ENCODE measurements at regions of chr17 and their contacts with region 1.

Region 1: DNA sequence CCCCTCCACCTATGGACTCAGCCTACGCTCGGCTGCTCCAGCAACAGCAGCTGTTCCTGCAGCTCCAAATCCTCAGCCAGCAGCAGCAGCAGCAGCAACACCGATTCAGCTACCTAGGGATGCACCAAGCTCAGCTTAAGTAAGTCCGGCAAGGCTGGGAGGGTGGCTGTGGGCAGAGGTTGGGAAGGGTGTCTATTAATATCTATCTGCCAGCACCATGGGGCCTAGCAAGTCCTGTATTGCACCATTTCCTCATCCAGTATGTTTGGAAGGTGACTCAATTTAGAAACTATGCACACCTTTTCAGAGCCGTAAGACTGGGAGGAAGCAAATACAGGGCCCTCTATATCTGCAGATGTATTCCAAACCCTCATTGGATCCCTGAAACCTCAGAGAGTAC is 45.0 kb upstream of the ARHGAP44 start:
- DNase-seq: no peak
- H3K4me3 ChIP-seq: no peak overlapping the region
- H3K27ac ChIP-seq: peak overlapping the region; percentile 13
- H3K27me3 ChIP-seq: no peaks in the 10 kb centered on the region
- CTCF ChIP-seq: no peak

Region 2: GRCh38 chr17:12256380-12256995 is 487.8 kb before region 1 on chr17:
- CTCF ChIA-PET with region 1: interaction called, 19 read pairs
- POLR2A ChIA-PET with region 1: no interaction called
- DNase-seq: peak; percentile 56
- H3K4me3 ChIP-seq: no peak overlapping the region
- H3K27ac ChIP-seq: no peak overlapping the region
- H3K27me3 ChIP-seq: no peaks in the 10 kb centered on the region
- CTCF ChIP-seq: peak; percentile 79

Region 3: GRCh38 chr17:12580640-12581039 is 163.7 kb before region 1 on chr17:
- CTCF ChIA-PET with region 1: no interaction called
- POLR2A ChIA-PET with region 1: no interaction called
- DNase-seq: no peak
- H3K4me3 ChIP-seq: no peak overlapping the region
- H3K27ac ChIP-seq: no peak overlapping the region
- H3K27me3 ChIP-seq: no peaks in the 10 kb centered on the region
- CTCF ChIP-seq: no peak

Region 4: DNA sequence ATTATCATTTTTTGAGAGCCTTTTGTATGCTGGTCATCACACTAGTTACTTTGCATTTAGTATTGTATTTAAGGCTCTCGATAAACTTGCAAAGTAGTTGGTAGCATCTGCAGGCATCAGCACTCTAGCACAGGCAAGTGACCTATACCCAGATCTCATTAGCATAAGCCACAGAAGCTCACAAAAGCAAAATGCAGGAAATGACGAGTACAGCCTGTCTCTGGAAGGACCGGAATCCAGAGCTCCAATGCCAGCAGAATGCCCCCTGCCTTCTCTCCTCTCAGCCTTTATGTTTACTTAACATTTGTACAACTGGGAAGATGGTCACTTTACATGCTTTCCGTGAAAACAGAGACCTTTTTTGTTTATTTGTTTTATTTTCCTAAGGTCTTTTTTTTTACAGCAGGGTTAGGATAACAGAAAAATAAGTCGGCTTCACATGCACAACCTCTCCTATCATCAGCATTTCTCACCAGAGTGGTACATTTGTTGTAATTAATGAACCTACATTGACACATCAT is 124.0 kb before region 1 on chr17:
- CTCF ChIA-PET with region 1: no interaction called
- POLR2A ChIA-PET with region 1: no interaction called
- DNase-seq: no peak
- H3K4me3 ChIP-seq: no peak overlapping the region
- H3K27ac ChIP-seq: peak overlapping the region; percentile 78
- H3K27me3 ChIP-seq: no peaks in the 10 kb centered on the region
- CTCF ChIP-seq: no peak

Region 5: DNA sequence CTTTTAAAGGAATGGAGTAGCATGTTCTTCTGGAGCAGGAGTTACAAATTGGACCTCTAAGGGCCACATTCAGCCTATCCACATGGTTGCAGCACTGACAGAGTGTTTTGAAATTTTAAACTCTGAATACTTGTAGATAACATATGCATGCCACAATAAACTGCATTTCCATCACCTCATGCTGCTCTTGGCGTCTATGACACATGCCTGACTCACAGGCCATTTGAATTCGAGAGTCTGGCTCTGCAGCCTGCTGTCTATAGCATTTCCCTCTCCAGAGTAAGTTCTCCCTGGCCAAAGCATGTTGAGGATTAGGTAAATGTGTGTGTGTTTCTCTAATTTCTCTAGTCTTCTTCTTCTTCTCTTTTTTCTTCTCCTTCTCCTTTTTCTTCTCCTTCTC is 107.3 kb before region 1 on chr17:
- CTCF ChIA-PET with region 1: no interaction called
- POLR2A ChIA-PET with region 1: no interaction called
- DNase-seq: peak; percentile 92
- H3K4me3 ChIP-seq: no peak overlapping the region
- H3K27ac ChIP-seq: no peak overlapping the region
- H3K27me3 ChIP-seq: no peaks in the 10 kb centered on the region
- CTCF ChIP-seq: no peak

Region 6: DNA sequence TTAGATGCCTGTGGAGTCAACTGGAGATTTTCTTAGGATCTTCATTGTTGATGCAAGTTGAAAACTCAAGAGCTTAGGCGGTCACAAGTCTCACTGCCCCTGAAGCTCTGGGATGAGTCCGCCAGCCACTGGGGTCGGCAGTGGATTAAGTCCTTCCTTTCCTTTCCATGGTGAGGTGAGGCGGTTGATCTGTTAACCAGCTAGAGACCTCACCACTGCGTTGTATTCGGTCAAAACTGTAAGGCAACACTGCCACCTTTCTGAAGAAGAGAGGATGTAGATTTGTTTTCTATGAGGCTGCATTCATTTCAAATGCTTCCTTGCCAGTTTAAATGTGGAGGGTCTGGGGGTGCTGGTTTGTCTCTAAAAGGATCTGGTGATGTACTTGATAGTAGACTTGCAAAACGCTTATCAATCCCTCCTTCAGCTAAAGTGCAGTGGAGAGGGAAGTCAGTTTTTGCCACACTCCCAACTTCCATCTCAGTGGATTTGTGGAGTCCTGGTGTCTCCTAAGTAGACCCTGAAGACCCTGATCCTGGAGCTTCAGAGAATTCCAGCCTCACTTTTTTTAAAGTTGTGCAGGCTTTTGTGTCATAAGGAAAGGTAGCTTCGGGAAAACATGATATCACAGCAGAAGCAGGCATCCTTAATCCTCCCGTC is 76.9 kb before region 1 on chr17:
- CTCF ChIA-PET with region 1: interaction called, 40 read pairs
- POLR2A ChIA-PET with region 1: interaction called, 4 read pairs
- DNase-seq: peak; percentile 70
- H3K4me3 ChIP-seq: peak overlapping the region; percentile 77
- H3K27ac ChIP-seq: peak overlapping the region; percentile 25
- H3K27me3 ChIP-seq: no peaks in the 10 kb centered on the region
- CTCF ChIP-seq: peak; percentile 75

Region 7: GRCh38 chr17:12680407-12680897 is 63.8 kb before region 1 on chr17:
- CTCF ChIA-PET with region 1: interaction called, 12 read pairs
- POLR2A ChIA-PET with region 1: no interaction called
- DNase-seq: no peak
- H3K4me3 ChIP-seq: peak overlapping the region; percentile 36
- H3K27ac ChIP-seq: no peak overlapping the region
- H3K27me3 ChIP-seq: no peaks in the 10 kb centered on the region
- CTCF ChIP-seq: no peak

Region 8: DNA sequence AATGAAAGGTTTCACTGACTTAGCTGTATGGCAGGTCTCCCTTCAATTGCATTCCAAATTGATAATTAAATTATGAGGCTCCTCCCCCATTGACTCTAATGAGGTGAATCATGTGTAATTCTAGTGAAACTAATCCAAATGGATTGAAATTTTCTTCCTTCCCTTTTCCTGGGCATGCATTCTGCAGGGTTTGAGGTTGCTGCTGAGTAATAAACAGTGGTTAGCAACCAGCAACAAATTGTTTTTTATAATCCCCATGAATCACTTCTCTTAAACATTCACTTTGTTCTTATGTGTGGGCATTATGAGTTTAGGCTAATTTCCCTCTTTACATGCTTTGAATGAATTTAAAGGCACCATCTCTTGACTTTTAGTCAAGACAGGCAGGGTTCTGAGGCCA is 35.2 kb before region 1 on chr17:
- CTCF ChIA-PET with region 1: interaction called, 10 read pairs
- POLR2A ChIA-PET with region 1: no interaction called
- DNase-seq: no peak
- H3K4me3 ChIP-seq: no peak overlapping the region
- H3K27ac ChIP-seq: no peak overlapping the region
- H3K27me3 ChIP-seq: no peaks in the 10 kb centered on the region
- CTCF ChIP-seq: no peak

Region 9: DNA sequence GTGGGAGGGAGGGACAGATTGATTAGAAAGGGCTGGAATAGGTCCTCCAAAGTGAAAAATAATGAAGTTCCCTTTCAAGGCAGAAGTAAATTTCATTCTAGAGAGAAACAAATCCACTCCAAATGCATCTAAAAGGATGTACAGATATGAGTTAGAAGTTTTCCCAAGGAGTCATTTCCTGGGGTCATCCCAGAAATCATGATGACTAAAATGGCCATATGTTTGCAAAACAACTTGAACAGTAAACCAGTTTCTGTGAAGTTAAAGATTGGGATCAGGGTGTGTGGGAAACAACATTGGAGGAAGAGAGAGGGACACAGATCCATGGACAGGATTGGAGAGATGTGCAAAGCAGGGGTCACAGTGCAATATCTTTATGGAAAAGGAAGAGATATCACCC is 12.5 kb after region 1 on chr17:
- CTCF ChIA-PET with region 1: interaction called, 25 read pairs
- POLR2A ChIA-PET with region 1: interaction called, 5 read pairs
- DNase-seq: no peak
- H3K4me3 ChIP-seq: no peak overlapping the region
- H3K27ac ChIP-seq: no peak overlapping the region
- H3K27me3 ChIP-seq: no peaks in the 10 kb centered on the region
- CTCF ChIP-seq: no peak

Region 10: DNA sequence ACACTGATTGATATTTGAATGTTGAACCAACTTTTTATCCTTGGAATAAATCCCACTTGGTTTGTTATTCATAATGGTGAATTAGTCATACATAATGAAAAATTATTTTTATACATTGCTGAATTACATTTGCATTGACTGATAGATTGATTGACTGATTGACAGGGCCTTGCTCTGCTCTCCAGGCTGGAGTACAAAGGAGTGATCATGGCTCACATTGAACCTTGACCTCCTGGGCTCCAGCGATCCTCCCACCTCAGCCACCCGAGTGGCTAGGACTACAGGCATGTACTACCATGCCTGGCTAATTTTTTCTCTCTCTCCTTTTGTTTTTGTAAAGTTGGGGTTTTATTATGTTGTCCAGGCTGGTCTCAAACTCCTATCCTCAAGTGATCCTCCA is 142.8 kb after region 1 on chr17:
- CTCF ChIA-PET with region 1: no interaction called
- POLR2A ChIA-PET with region 1: no interaction called
- DNase-seq: no peak
- H3K4me3 ChIP-seq: no peak overlapping the region
- H3K27ac ChIP-seq: no peak overlapping the region
- H3K27me3 ChIP-seq: no peaks in the 10 kb centered on the region
- CTCF ChIP-seq: no peak

Region 11: DNA sequence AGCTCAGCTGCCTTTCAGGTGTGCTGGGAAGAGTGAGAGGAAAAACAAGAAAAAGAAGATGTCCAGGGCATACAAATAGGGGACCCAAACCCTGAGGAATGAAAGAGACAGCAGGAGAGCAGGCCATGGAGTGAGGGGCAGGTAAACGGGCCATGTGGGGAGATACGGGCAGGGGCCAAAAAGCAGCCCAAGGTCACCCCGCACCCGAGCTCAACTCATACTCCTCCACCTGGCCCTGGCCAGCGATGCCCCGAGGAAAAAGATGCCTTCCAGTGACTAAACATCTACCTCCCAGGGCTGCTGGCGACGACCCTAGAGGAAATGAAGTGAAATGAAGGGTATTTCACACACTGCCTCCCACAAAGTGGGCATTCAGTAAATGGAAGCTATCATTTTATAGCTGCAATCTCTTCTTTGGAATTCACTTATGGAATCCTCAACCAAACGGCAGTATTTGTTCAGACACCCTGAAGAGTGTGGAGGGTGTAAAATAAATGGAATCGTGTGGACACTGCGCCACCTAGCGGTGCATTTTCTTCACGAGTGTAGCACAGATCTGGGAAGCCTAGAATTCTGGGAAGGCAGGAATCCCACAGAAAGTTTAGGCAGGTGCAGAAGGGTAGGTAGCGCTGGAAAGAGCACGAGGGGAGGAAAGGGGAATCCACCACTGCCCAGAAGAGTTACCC is 258.6 kb after region 1 on chr17:
- CTCF ChIA-PET with region 1: interaction called, 11 read pairs
- POLR2A ChIA-PET with region 1: interaction called, 5 read pairs
- DNase-seq: peak; percentile 55
- H3K4me3 ChIP-seq: no peak overlapping the region
- H3K27ac ChIP-seq: no peak overlapping the region
- H3K27me3 ChIP-seq: no peaks in the 10 kb centered on the region
- CTCF ChIP-seq: peak; percentile 80

Measured in AG04450 (cell line).